ENCODE measurements at regions of chr13 and their contacts with region 1.

Region 1: GRCh38 chr13:93233997-93234416 is 7.4 kb downstream of the GPC6 start:
- DNase-seq: peak; percentile 41
- ATAC-seq: peak; percentile 87
- H3K4me3 ChIP-seq: no peak overlapping the region
- H3K27ac ChIP-seq: peak overlapping the region; percentile 38
- H3K4me1 ChIP-seq: peaks cover 50% of the 10 kb centered on the region
- H3K27me3 ChIP-seq: no peaks in the 10 kb centered on the region
- CTCF ChIP-seq: peak; percentile 77
- EP300 ChIP-seq: no peak
- POLR2A ChIP-seq: no peak
- RAD21 ChIP-seq: peak; percentile 59

Region 2: DNA sequence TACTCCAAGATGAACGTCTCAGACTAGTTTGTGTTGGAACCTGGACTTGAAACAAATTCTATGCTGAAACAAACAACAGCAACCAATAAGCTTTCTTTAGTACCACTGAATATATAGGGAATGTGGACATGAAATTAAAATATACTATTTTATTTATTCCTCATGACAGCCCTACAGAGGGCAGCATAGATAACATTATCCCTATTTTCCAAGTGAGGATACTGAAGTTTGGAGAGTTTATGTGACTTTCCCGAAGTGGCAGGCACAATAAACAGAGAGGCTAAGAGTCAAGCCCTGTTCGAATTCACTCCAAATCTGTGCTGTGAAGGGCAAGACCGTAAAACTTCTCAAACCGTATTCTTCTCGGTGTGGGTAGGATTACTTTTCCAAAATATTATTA is 517.3 kb before region 1 on chr13:
- CTCF ChIA-PET with region 1: no interaction called
- POLR2A ChIA-PET with region 1: no interaction called
- in situ Hi-C with region 1: no loop called
- intact Hi-C with region 1: loop called (anchors 5 kb)
- DNase-seq: peak; percentile 5
- ATAC-seq: no peak
- H3K4me3 ChIP-seq: no peak overlapping the region
- H3K27ac ChIP-seq: no peak overlapping the region
- H3K4me1 ChIP-seq: no peaks in the 10 kb centered on the region
- H3K27me3 ChIP-seq: no peaks in the 10 kb centered on the region
- CTCF ChIP-seq: 0 out of 2 replicates have a peak, but pooled peaks have one; percentile 11
- EP300 ChIP-seq: no peak
- POLR2A ChIP-seq: no peak
- RAD21 ChIP-seq: no peak

Region 3: GRCh38 chr13:92967923-92968322 is 266.1 kb before region 1 on chr13:
- CTCF ChIA-PET with region 1: interaction called, 3 read pairs
- POLR2A ChIA-PET with region 1: no interaction called
- in situ Hi-C with region 1: no loop called
- intact Hi-C with region 1: loop called (anchors 5 kb)
- DNase-seq: peak; percentile 18
- ATAC-seq: peak; percentile 71
- H3K4me3 ChIP-seq: no peak overlapping the region
- H3K27ac ChIP-seq: no peak overlapping the region
- H3K4me1 ChIP-seq: 0 out of 2 replicates have a peak, but pooled peaks cover 13% of the 10 kb centered on the region
- H3K27me3 ChIP-seq: no peaks in the 10 kb centered on the region; a peak in 1 of 5 replicates
- CTCF ChIP-seq: peak; percentile 62
- EP300 ChIP-seq: no peak
- POLR2A ChIP-seq: no peak
- RAD21 ChIP-seq: no peak

Region 4: DNA sequence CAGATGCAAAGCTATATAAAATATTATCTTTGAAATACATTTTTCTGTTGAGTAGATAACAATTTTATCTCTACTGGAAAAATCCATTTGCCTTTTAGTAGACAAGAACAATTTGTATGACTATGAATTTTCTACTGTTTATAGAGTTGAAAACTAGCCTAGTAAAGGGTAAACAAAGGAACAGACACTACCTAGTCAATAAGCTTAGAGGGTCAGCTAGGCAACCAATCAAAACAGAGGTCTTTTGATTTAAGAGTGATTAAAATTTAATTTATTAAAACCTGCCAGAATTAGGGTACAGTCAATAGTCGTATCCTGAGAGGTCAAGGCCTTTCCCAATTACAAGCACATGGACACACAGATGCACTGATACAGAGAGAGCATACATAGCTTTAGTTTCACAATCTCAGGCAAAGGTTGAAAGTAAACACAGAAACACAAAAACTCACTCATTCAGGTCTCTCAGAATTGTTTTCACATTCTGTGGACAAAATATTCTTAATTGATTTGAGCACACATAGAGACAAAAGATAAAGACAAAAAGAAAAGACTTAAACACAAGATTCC is 31.9 kb before region 1 on chr13:
- CTCF ChIA-PET with region 1: no interaction called
- POLR2A ChIA-PET with region 1: no interaction called
- in situ Hi-C with region 1: no loop called
- intact Hi-C with region 1: no loop called
- DNase-seq: peak; percentile 80
- ATAC-seq: peak; percentile 95
- H3K4me3 ChIP-seq: no peak overlapping the region; a peak in 1 of 6 replicates
- H3K27ac ChIP-seq: no peak overlapping the region
- H3K4me1 ChIP-seq: peaks cover 16% of the 10 kb centered on the region
- H3K27me3 ChIP-seq: no peaks in the 10 kb centered on the region
- CTCF ChIP-seq: no peak
- EP300 ChIP-seq: peak in 1 of 2 experiments; percentile 90; a peak in 2 of 4 replicates
- POLR2A ChIP-seq: no peak
- RAD21 ChIP-seq: no peak